ENCODE measurements at regions of chr7 and their contacts with region 1.

Region 1: DNA sequence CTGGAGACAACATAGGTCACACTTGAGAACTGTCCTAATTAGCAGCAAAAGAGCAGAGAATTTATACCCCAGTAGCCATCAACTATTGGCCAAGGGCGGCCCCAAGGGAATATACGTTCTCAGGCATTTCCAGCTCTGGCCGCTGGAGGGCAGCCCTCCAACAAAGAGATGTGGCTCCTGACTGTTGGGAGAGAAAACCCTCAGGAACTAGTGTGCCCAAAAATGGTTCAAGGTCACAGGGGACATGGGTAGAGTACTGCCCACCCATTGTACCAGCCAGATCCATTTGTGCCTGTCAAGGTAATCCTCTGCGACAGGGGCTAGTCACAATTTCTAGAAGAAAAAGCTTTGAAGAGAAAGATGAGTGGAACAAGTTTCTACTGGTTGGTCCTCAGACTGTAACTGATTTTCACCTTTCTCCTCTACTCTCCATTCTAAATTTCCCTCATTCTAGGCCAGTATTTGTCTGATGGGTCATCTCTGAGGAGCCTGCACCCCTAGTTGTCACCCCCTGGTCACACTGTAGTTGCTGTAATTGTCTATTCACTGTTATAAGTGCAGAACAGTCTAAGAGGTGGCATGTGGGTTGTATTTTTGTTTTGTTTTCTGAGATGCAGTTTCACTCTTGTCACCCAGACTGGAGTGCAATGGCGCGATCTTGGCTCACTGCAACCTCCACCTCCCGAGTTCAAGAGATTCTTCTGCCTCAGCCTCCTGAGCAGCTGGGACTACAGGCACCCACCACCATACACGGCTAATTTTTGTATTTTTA is 14.7 kb upstream of the C7orf33 start:
- DNase-seq: peak; percentile 21
- H3K4me3 ChIP-seq: no peak overlapping the region
- H3K27ac ChIP-seq: no peak overlapping the region
- H3K27me3 ChIP-seq: no peaks in the 10 kb centered on the region
- CTCF ChIP-seq: peak; percentile 91

Region 2: DNA sequence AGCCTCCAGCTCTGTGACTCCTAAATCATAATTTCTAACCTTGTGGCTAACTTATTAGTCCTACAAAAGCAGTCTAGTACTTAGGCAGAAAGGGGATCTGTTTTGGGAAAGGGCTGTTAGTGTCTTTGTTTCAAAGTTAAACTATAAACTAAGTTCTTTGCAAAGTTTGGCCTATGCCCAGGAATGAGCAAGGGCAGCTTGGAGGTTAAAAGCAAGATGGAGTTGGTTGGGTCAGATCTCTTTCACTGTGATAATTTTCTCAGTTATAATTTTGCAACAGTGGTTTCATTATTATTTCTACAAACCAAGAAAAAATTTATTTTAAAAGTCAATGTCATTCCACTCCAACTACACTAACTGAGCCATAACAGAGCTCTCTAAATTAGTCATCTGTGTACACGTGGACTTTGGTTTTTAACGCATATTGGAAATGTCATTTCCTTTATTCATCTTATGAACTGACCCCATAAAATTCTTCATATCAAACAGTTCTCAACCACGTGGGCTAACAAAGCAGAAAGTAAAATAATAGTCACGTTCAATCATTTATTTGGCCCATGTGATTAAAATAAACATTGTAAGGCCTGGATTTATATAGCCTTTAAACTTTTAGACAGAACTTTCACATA is 128.5 kb before region 1 on chr7:
- CTCF ChIA-PET with region 1: no interaction called
- POLR2A ChIA-PET with region 1: no interaction called
- DNase-seq: no peak
- H3K4me3 ChIP-seq: no peak overlapping the region
- H3K27ac ChIP-seq: no peak overlapping the region
- H3K27me3 ChIP-seq: no peaks in the 10 kb centered on the region
- CTCF ChIP-seq: no peak

Region 3: GRCh38 chr7:148563583-148564274 is 12.1 kb before region 1 on chr7:
- CTCF ChIA-PET with region 1: interaction called, 23 read pairs
- POLR2A ChIA-PET with region 1: no interaction called
- DNase-seq: no peak
- H3K4me3 ChIP-seq: no peak overlapping the region
- H3K27ac ChIP-seq: no peak overlapping the region
- H3K27me3 ChIP-seq: no peaks in the 10 kb centered on the region
- CTCF ChIP-seq: no peak

Region 4: GRCh38 chr7:148940702-148941597 is 365.1 kb after region 1 on chr7:
- CTCF ChIA-PET with region 1: interaction called, 14 read pairs
- POLR2A ChIA-PET with region 1: no interaction called
- DNase-seq: peak; percentile 77
- H3K4me3 ChIP-seq: peak overlapping the region; percentile 92
- H3K27ac ChIP-seq: peak overlapping the region; percentile 91
- H3K27me3 ChIP-seq: no peaks in the 10 kb centered on the region
- CTCF ChIP-seq: no peak